H1 (cell line): ENCODE measurements at regions of chr9 and their contacts with region 1.

Region 1: GRCh38 chr9:125361837-125362531 is 100.4 kb downstream of the GAPVD1 start:
- DNase-seq: no peak
- H3K4me3 ChIP-seq: no peak overlapping the region
- H3K27ac ChIP-seq: no peak overlapping the region
- H3K4me1 ChIP-seq: peaks cover 0 to 3% (median 1%) of the 10 kb centered on the region in 4 experiments; a peak in 1 of 7 replicates
- H3K27me3 ChIP-seq: no peaks in the 10 kb centered on the region
- CTCF ChIP-seq: peak; percentile 42 to 73 (median 43)
- EP300 ChIP-seq: no peak
- POLR2A ChIP-seq: no peak
- RAD21 ChIP-seq: peak; percentile 19 to 41; a peak in 2 of 4 replicates

Region 2: GRCh38 chr9:125255781-125256391 is 106.1 kb before region 1 on chr9:
- CTCF ChIA-PET with region 1: interaction called, 24 read pairs
- POLR2A ChIA-PET with region 1: no interaction called
- DNase-seq: no peak
- H3K4me3 ChIP-seq: no peak overlapping the region
- H3K27ac ChIP-seq: no peak overlapping the region
- H3K4me1 ChIP-seq: no peaks in the 10 kb centered on the region
- H3K27me3 ChIP-seq: no peaks in the 10 kb centered on the region
- CTCF ChIP-seq: peak; percentile 42 to 60 (median 50)
- EP300 ChIP-seq: no peak
- POLR2A ChIP-seq: no peak
- RAD21 ChIP-seq: peak; percentile 83 to 85

Region 3: DNA sequence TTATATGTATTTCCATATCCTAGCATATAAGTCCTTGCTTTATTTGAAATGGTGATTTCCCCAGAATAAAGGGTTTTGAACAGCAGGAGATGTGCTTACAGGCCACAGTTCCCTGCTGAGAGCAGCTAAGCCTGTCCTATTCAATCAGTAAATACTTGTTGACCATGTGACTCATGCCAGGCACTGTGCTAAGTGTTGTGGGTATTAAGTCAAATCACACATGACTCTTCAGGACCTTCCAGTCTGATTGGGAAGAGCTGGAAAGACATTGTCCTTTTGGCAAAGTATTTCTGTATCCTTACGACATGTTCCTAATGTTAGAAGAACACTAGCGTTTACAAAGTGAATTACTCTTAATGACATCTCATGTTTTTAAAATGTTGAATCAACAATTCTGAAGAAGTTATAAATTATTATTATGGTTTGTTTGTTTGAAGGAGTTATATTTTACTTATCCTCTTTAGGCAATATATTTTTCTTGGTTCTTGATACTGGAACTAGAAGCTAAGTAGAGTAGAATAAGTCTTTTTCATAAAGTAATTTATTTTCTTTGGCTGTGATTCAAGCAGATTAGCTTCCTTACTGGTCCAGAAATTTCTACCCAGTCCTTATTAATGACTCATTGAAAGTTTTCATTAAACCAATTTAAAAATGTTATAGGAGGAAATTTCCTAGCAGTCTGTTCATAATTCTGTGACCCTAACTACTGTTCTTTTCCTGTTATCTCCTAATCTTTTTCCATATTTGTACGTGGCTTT is 18.3 kb before region 1 on chr9:
- CTCF ChIA-PET with region 1: interaction called, 24 read pairs
- POLR2A ChIA-PET with region 1: interaction called, 3 read pairs
- DNase-seq: peak in 1 of 2 experiments; percentile 49
- H3K4me3 ChIP-seq: peak overlapping the region in 1 of 4 experiments; percentile 20; a peak in 1 of 8 replicates
- H3K27ac ChIP-seq: no peak overlapping the region
- H3K4me1 ChIP-seq: peaks cover 0 to 11% (median 4%) of the 10 kb centered on the region in 4 experiments; a peak in 5 of 7 replicates
- H3K27me3 ChIP-seq: no peaks in the 10 kb centered on the region
- CTCF ChIP-seq: no peak
- EP300 ChIP-seq: no peak
- POLR2A ChIP-seq: no peak
- RAD21 ChIP-seq: no peak

Region 4: DNA sequence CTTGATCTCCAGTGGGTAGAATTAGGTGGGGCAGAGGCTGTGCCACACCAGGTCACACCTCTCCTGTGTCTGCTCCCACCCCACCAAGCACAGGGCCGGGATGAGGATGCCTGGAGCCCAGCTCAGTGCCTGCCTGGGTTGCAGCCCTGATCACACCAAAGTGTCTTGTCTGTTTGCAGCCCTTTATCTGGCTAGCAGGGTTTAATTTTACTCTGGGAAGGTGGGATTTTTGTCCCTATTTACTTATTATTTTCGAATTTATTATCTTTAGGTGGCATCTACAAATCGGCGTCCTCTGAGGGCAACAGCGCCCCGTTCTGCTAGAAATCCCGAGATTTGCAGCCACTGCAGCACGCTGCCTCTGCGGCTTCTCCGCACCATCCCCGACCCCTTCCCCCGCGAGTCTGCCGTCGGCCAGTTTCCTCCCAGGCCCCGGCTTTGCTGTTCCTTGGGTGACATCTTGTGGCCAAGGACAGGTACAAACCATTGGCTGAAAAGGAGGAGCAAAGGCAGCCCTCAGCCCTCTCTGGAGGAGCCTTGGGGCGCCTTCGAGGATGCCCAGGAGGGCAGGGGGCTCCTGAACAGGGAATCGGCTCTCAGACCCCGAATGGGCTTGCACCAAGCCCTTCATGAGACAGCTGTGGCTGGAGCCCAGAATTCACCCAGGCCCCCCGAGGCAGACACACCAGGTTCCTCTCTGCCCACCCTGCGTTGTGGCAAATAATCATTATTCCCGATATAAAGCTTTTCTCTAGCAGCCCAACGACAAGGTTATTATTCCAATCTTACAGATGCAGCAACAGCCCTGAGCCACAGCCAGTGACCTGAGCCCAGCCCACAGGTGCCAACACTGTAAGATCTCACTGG is 12.7 kb after region 1 on chr9:
- CTCF ChIA-PET with region 1: interaction called, 19 read pairs
- POLR2A ChIA-PET with region 1: interaction called, 3 read pairs
- DNase-seq: peak; percentile 68 to 81
- H3K4me3 ChIP-seq: peak overlapping the region in 2 of 4 experiments; percentile 10 to 35; a peak in 3 of 8 replicates
- H3K27ac ChIP-seq: no peak overlapping the region
- H3K4me1 ChIP-seq: peaks cover 0 to 11% (median 4%) of the 10 kb centered on the region in 4 experiments; a peak in 4 of 7 replicates
- H3K27me3 ChIP-seq: no peaks in the 10 kb centered on the region; a peak in 1 of 7 replicates
- CTCF ChIP-seq: peak; percentile 69 to 93 (median 89)
- EP300 ChIP-seq: no peak
- POLR2A ChIP-seq: no peak
- RAD21 ChIP-seq: peak; percentile 100

Region 5: DNA sequence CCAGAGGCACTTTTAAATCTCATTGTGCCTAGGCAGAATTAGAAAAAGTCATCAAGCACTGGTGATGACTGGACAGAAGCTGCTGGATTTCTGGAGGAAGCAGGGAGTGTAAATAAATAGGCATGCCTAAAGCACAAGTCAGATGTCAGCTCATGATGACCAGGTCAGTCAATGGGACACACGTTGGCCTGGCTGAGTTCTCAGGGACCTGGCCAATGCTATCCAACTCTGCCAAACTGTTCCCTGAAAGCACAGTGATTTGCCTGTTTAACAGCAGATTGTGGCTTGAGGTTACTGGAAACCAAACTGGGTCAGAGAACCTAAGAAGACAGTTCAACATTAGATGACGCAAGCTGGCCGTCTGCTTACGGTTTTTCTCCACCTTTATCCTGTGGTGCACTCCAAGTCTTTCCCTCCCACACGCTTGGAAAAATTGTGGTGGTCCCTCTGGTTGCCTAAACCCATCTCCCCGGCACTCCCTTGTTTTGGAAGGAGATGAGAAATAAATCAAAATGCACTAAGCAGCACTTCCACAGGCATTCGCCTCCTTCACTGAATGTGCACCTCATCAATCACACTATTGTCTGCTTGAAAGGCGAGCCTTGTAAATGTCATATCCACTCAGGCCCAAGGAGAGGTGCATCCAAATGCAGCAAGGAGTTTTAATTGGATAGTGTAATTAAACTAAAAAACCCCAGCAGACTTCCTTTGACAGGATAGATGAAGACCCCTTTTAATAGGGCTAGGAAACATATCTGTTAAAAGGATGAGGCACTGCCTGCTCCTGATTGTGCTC is 99.1 kb after region 1 on chr9:
- CTCF ChIA-PET with region 1: no interaction called
- POLR2A ChIA-PET with region 1: no interaction called
- DNase-seq: no peak
- H3K4me3 ChIP-seq: no peak overlapping the region
- H3K27ac ChIP-seq: no peak overlapping the region
- H3K4me1 ChIP-seq: no peaks in the 10 kb centered on the region; a peak in 1 of 7 replicates
- H3K27me3 ChIP-seq: no peaks in the 10 kb centered on the region
- CTCF ChIP-seq: no peak
- EP300 ChIP-seq: no peak
- POLR2A ChIP-seq: no peak
- RAD21 ChIP-seq: no peak

Region 6: DNA sequence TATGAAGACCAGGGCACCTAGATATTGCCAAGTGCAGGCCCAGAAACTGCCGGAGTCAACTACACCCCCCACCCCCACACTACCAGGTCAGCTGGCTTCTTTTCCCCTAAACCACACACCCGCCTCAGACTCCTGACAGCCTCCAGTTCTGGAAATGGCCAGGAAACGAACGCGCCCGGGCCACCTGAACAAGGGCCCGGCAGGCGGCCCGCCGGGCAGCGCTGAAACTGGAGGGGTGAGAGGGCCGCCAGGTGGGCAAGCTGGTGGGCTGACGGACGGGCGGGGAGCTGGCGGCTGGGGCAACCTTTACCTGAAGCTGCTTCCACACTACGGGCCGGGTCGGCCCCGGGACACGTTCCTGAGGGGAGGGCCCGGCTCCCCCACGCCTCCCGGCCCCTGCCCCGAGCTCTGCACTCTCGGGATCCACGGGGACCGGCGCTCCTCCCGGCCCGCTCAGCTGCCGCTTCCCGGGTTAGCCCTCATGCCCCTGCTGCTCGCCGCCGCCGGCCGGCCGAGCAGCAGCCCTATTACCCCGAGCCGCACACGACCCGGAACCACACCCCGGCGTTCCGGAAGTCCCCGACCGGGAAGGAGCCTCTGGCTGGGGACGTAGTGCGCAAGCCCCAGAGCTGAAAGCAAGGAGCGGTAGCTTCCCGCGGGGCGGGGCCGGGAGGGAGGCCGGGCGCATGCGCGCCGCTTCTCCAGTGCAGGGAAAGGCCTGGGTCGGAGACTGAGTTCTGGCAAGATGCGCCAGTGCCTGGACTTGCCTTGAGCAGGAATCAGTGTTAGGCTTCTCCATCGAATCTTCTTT is 344.9 kb after region 1 on chr9 and contains the start of gene MAPKAP1:
- CTCF ChIA-PET with region 1: no interaction called
- POLR2A ChIA-PET with region 1: no interaction called
- DNase-seq: peak; percentile 91 to 97
- H3K4me3 ChIP-seq: peak within 1 kb of the TSS; percentile 79 to 93 (median 82)
- H3K27ac ChIP-seq: peak within 1 kb of the TSS; percentile 74; the same call in 1 of the 2 replicates
- H3K4me1 ChIP-seq: peaks cover 0 to 5% (median under 1%) of the 10 kb centered on the region in 4 experiments; a peak in 5 of 7 replicates
- H3K27me3 ChIP-seq: no peaks in the 10 kb centered on the region
- CTCF ChIP-seq: no peak
- EP300 ChIP-seq: no peak
- POLR2A ChIP-seq: peak in 1 of 2 experiments; percentile 87; a peak in 2 of 3 replicates
- RAD21 ChIP-seq: peak in 1 of 2 experiments; percentile 6; a peak in 1 of 4 replicates
- total RNA-seq, gene MAPKAP1: 140 and 146 TPM in 2 replicates